Activated CD4-positive, alpha-beta T cell treated with anti-CD3 and anti-CD28 coated beads for 36 hours (primary cell): ENCODE measurements at regions of chr14 and their contacts with region 1.

Region 1: DNA sequence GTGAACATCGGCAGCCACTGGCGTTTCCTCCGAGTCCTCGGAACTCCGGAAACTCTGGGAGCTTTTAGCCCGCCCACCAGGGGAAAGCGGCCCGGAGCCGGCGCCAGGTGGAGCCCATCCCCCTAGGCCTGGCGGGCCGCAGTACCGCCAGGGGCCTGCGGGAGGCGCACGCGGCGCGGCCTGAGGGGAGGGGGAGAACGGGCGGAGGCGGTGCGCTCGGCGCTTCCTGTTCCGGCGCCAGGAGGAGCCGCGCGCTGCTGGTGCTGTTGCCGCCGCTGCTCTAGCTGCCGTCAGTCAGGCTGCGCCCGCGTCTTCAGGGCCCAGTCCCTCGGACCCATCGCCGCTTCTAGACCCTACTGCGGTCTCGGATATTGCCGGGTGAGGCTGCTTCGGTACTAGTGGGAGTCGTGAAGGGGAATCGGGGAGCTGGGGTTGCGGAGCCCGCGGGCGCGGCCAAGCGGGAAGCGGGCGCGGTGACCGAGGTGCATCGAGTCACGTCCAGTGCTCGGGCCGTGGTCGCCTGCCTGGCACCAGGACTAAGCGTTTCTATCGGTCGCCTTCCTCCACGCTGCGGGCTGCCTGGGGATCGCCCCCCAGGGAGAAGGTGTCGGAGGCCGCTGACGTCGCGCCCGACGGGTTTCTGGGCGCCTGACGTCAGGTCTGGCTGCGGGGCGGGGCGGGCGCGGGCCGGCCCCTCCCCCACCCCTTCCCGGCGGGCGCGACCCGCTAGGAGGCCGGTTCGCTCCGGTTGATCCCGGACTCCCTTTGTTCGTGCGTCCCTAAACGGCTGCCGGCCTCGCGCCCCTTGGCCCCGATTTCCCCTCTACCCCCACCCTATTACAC is at the start of gene MAPK1IP1L:
- DNase-seq: peak; percentile 95
- ATAC-seq: peak; percentile 94
- H3K4me3 Mint-ChIP-seq: peak within 1 kb of the TSS; percentile 82
- H3K27ac Mint-ChIP-seq: peak within 1 kb of the TSS; percentile 96
- H3K4me1 Mint-ChIP-seq: peaks cover 33% of the 10 kb centered on the region
- H3K27me3 Mint-ChIP-seq: no peaks in the 10 kb centered on the region
- total RNA-seq, gene MAPK1IP1L: 98.6 to 180 TPM

Region 2: DNA sequence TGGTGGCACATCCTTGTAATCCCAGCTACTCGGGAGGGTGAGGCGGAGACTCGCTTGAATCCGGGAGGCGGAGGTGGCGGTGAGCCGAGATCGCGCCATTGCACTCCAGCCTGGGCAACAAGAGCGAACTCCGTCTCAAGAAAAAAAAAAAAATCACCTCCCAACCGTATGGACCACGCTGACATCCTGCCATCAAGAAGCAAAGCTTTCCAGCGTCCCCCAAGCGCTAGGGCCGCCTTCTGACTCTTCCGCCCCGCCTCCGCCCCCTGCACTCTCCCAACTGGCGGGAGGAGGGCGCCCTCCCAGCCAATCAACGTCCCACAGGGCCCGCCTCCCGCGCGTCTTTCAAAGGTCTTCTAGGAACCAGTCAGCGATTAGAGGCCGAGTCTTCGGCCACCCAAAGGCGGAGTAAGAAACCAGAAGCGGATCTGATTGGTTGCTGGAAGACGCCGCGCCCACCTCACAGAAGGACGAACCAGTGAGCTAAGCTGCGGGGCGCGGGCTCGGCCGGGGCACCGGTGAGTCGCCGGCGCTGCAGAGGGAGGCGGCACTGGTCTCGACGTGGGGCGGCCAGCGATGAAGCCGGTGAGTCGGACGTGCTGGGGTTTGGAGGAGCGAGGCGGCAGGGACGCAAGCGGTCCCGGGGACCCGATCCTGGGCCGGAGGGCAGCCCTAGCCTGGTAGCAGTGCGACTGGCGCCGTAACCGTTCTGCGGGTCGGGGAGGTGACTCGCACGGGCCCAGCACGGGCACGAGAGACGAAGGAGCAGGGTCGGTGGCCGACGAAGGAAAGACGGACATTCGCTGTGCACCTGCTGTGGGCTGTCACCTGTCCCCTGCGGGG is 654.9 kb before region 1 on chr14 and contains the start of gene CDKN3:
- CTCF ChIA-PET with region 1: interaction called, 3 read pairs
- POLR2A ChIA-PET with region 1: no interaction called
- intact Hi-C with region 1: loop called in 1 of 2 experiments (anchors 5 kb)
- DNase-seq: peak; percentile 98
- ATAC-seq: peak; percentile 97
- H3K4me3 Mint-ChIP-seq: peak within 1 kb of the TSS; percentile 82
- H3K27ac Mint-ChIP-seq: peak within 1 kb of the TSS; percentile 76
- H3K4me1 Mint-ChIP-seq: peaks cover 24% of the 10 kb centered on the region
- H3K27me3 Mint-ChIP-seq: no peaks in the 10 kb centered on the region
- total RNA-seq, gene CDKN3: 86.7 to 133 TPM

Region 3: GRCh38 chr14:55026793-55027561 is 24.7 kb before region 1 on chr14 and contains the starts of genes SOCS4 and WDHD1:
- CTCF ChIA-PET with region 1: interaction called, 46 read pairs
- POLR2A ChIA-PET with region 1: interaction called, 31 read pairs
- intact Hi-C with region 1: loop called (anchors 1 kb)
- DNase-seq: peak; percentile 98
- ATAC-seq: peak; percentile 93
- H3K4me3 Mint-ChIP-seq: peak within 1 kb of the TSS; percentile 95
- H3K27ac Mint-ChIP-seq: peak within 1 kb of the TSS; percentile 97
- H3K4me1 Mint-ChIP-seq: peaks cover 47% of the 10 kb centered on the region
- H3K27me3 Mint-ChIP-seq: no peaks in the 10 kb centered on the region
- total RNA-seq, gene SOCS4: 18.4 to 21.3 TPM
- total RNA-seq, gene WDHD1: 64.4 to 71.1 TPM

Region 4: DNA sequence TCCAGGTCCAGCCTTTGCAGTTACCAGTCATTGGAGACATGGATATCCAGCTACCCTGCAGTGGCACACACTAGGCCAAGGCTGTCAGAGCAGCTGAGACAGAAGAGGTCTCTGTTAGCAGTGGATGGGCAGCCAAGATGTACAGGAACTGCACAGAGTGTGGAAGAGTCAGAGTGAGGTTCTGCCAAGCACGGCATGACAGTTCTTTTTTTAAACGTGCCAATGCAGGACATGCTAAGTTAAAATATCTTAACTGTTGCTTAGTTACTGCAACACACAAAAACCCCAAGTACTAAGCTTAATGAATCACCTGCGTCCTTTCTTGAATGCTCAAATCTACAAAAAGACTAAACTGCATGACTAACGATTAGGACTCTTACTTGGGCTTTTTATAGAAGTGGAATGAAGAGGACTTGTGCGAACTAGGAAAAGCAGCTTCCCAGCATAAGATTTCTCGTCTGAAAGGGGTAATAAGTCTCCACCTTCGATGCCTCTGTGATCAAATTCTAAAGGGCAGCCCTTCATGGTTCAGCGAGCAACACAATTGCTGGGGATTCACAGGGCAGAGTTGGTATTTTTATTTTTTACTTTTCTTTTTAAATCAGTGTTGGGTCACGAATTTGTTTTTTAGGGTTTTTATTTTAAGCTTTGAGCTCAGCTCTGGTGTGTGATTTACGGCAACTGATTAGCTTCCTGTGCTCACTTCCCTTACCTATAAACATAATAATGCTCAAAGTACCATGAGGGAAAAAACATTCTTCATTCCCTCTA is 20.4 kb after region 1 on chr14:
- CTCF ChIA-PET with region 1: interaction called, 4 read pairs
- POLR2A ChIA-PET with region 1: interaction called, 8 read pairs
- intact Hi-C with region 1: loop called (anchors 1 to 2 kb)
- DNase-seq: peak; percentile 58
- ATAC-seq: peak; percentile 89
- H3K4me3 Mint-ChIP-seq: peak overlapping the region; percentile 40
- H3K27ac Mint-ChIP-seq: peak overlapping the region; percentile 83
- H3K4me1 Mint-ChIP-seq: peaks cover 32% of the 10 kb centered on the region
- H3K27me3 Mint-ChIP-seq: no peaks in the 10 kb centered on the region

Region 5: DNA sequence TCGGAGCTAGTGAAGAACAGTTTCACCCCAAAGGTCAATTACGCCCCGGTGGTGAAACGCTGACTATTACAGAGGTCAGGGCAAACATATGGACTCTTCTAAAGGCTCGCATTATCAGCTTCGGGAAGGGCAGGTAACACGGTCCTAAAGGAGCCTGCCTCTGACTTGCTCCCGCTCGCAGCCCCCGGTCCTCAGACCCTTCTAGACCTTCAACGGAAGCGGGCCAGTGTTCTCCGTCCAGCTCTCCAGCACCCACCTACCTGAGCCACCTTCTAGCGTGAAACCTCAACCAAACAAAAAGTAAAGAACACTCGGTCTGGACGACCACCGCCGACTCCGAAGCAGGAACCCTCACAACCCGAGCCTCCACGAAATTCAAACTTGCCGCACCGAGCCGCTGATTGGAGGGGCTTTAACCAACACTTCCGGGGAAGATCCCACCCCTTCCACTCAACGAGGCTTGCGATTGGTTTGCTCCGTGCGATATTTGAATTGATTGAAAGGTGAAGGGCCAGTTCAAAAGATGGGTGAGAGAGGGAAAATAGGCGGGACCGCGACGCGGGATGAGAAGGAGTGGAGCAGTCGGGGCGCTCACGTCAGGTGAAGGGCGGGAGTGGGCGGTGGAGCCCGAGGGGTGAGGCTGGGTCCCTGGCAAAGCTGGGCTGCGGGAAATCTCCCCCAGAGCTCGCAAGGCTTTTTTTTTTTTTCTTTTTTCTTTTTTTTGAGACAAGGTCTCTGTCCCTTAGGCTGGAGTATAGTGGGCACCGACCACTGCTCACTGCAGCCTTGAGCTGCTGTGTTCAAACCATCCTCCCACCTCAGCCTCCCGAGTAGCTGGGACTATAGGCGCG is 139.8 kb after region 1 on chr14 and contains the start of gene DLGAP5:
- CTCF ChIA-PET with region 1: interaction called, 3 read pairs
- POLR2A ChIA-PET with region 1: interaction called, 4 read pairs
- intact Hi-C with region 1: loop called in 1 of 2 experiments (anchors 1 kb)
- DNase-seq: peak; percentile 95
- ATAC-seq: peak; percentile 99
- H3K4me3 Mint-ChIP-seq: peak within 1 kb of the TSS; percentile 91
- H3K27ac Mint-ChIP-seq: peak within 1 kb of the TSS; percentile 84
- H3K4me1 Mint-ChIP-seq: peaks cover 29% of the 10 kb centered on the region
- H3K27me3 Mint-ChIP-seq: no peaks in the 10 kb centered on the region
- total RNA-seq, gene DLGAP5: 97.4 to 100 TPM

Region 6: DNA sequence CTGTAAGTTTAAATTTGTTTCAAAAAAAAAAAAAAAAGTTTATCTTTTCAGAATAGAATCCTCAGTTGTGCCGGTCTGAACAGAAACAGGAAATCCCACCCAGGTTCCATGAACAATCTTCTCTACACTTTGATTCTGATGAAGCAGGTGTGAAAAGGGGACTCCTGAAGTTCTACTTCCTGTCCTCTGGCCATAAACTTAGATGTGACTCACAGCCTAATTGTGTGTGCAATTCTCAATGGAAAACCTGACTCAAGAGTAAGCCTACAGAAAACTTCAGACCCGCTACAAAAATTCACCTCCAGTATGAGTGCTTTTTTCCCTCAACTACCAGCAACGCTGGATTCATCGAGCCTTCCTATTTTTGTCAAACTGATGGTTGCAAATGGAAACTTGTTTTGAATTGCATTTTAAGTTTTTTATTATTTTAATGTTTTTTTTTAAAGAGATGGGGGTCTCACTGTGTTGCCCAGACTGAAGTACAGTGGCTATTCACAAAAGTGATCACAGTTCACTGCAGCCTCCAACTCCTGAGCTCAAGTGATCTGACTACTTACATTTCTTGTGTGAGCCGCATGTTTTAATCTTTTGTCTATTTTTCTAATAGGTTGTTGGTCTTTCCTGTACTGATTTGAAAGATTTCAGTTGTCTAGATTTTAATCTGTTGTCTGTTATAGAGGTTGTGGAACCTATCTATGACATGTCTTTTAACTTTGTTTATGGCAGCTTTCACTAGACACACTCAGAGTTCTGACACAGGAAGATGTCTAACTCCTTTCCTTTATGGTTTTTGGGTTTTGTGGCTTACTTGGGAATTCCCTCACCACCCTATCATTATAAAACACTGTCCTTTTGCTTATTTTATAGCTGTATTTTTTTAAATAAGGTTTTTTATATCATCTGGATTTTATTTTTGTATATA is 322.4 kb after region 1 on chr14:
- CTCF ChIA-PET with region 1: no interaction called
- POLR2A ChIA-PET with region 1: no interaction called
- intact Hi-C with region 1: loop called (anchors 1 to 2 kb)
- DNase-seq: peak; percentile 39
- ATAC-seq: peak; percentile 88
- H3K4me3 Mint-ChIP-seq: peak overlapping the region; percentile 45
- H3K27ac Mint-ChIP-seq: peak overlapping the region; percentile 96
- H3K4me1 Mint-ChIP-seq: peaks cover 46% of the 10 kb centered on the region
- H3K27me3 Mint-ChIP-seq: no peaks in the 10 kb centered on the region